ENCODE measurements at regions of chr7 and their contacts with region 1.

Region 1: GRCh38 chr7:23055582-23056178 is 41.8 kb upstream of the HYCC1 start:
- DNase-seq: peak; percentile 45
- H3K4me3 ChIP-seq: no peak overlapping the region
- H3K27ac ChIP-seq: no peak overlapping the region
- H3K27me3 ChIP-seq: no peaks in the 10 kb centered on the region
- CTCF ChIP-seq: peak; percentile 97

Region 2: GRCh38 chr7:22551768-22552513 is 503.7 kb before region 1 on chr7:
- CTCF ChIA-PET with region 1: interaction called, 236 read pairs
- POLR2A ChIA-PET with region 1: no interaction called
- DNase-seq: no peak
- H3K4me3 ChIP-seq: no peak overlapping the region
- H3K27ac ChIP-seq: no peak overlapping the region
- H3K27me3 ChIP-seq: peaks cover 10% of the 10 kb centered on the region
- CTCF ChIP-seq: no peak

Region 3: GRCh38 chr7:22672846-22673652 is 382.6 kb before region 1 on chr7:
- CTCF ChIA-PET with region 1: interaction called, 13 read pairs
- POLR2A ChIA-PET with region 1: no interaction called
- DNase-seq: no peak
- H3K4me3 ChIP-seq: no peak overlapping the region
- H3K27ac ChIP-seq: peak overlapping the region; percentile 13
- H3K27me3 ChIP-seq: no peaks in the 10 kb centered on the region
- CTCF ChIP-seq: no peak

Region 4: GRCh38 chr7:22791204-22792158 is 264.2 kb before region 1 on chr7:
- CTCF ChIA-PET with region 1: interaction called, 10 read pairs
- POLR2A ChIA-PET with region 1: no interaction called
- DNase-seq: no peak
- H3K4me3 ChIP-seq: no peak overlapping the region
- H3K27ac ChIP-seq: no peak overlapping the region
- H3K27me3 ChIP-seq: no peaks in the 10 kb centered on the region
- CTCF ChIP-seq: no peak

Region 5: DNA sequence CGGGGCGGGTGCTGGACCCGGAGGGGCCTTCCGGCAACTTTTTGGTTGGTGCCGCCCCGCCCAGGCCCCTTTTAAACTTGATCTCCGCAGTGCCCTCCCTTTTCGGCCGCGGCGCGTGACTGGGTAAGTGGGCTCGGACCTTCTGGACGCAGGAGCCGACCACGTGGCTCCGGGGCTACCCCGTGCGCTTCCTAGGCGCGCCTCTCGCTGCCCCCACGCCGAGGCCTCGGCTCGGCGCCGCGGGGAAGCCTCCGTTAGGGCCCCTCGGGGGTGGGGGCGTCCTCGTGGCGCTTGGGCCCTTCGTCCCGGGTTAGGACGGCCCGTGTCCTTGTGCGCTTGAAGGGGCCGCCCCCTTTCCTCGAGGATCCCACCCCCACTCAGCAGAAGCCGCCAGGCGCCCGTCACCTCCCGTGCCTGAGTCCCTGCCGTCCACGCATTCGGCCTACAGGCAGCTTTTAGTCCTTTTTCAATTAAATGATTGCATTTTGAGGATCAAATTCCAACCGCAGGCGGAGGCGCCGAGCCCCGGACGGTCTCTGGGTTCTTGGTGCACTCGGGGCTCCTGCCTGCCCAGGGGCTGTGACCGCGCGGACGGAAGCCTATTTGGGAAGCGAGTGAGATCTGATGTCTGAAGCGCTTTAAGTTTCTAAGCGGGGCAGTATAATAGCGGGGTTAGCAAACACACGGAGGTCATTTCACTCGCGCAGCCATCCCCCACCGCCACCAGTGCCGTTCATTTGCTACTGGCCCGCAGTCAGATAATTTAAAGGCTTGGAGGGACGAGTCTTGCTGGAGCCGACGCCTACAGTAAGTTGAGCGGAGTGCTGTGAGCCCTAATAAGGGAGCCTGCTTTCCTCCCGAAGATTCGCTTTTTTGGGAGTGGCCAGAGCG is 201.3 kb before region 1 on chr7:
- CTCF ChIA-PET with region 1: interaction called, 44 read pairs
- POLR2A ChIA-PET with region 1: no interaction called
- DNase-seq: no peak
- H3K4me3 ChIP-seq: peak overlapping the region; percentile 69
- H3K27ac ChIP-seq: peak overlapping the region; percentile 93
- H3K27me3 ChIP-seq: no peaks in the 10 kb centered on the region
- CTCF ChIP-seq: no peak; the same call in none of the 2 replicates

Region 6: GRCh38 chr7:22944022-22944421 is 111.7 kb before region 1 on chr7:
- CTCF ChIA-PET with region 1: interaction called, 27 read pairs
- POLR2A ChIA-PET with region 1: no interaction called
- DNase-seq: peak; percentile 68
- H3K4me3 ChIP-seq: no peak overlapping the region
- H3K27ac ChIP-seq: peak overlapping the region; percentile 32
- H3K27me3 ChIP-seq: no peaks in the 10 kb centered on the region
- CTCF ChIP-seq: no peak

Region 7: GRCh38 chr7:23026164-23026563 is 29.5 kb before region 1 on chr7:
- CTCF ChIA-PET with region 1: interaction called, 25 read pairs
- POLR2A ChIA-PET with region 1: no interaction called
- DNase-seq: no peak
- H3K4me3 ChIP-seq: no peak overlapping the region
- H3K27ac ChIP-seq: no peak overlapping the region
- H3K27me3 ChIP-seq: no peaks in the 10 kb centered on the region
- CTCF ChIP-seq: no peak

Region 8: GRCh38 chr7:24531255-24531654 is 1475.6 kb after region 1 on chr7:
- CTCF ChIA-PET with region 1: no interaction called
- POLR2A ChIA-PET with region 1: no interaction called
- DNase-seq: no peak
- H3K4me3 ChIP-seq: no peak overlapping the region
- H3K27ac ChIP-seq: no peak overlapping the region
- H3K27me3 ChIP-seq: no peaks in the 10 kb centered on the region
- CTCF ChIP-seq: no peak